ENCODE measurements at regions of chr2 and their contacts with region 1.

Region 1: GRCh38 chr2:170361090-170361936 is 183.4 kb downstream of the MYO3B start:
- DNase-seq: peak; percentile 77
- H3K4me3 Mint-ChIP-seq: no peak overlapping the region
- H3K27ac Mint-ChIP-seq: no peak overlapping the region
- H3K4me1 Mint-ChIP-seq: peaks cover 7% of the 10 kb centered on the region
- H3K27me3 Mint-ChIP-seq: peaks cover 58% of the 10 kb centered on the region
- CTCF ChIP-seq: peak; percentile 76

Region 2: DNA sequence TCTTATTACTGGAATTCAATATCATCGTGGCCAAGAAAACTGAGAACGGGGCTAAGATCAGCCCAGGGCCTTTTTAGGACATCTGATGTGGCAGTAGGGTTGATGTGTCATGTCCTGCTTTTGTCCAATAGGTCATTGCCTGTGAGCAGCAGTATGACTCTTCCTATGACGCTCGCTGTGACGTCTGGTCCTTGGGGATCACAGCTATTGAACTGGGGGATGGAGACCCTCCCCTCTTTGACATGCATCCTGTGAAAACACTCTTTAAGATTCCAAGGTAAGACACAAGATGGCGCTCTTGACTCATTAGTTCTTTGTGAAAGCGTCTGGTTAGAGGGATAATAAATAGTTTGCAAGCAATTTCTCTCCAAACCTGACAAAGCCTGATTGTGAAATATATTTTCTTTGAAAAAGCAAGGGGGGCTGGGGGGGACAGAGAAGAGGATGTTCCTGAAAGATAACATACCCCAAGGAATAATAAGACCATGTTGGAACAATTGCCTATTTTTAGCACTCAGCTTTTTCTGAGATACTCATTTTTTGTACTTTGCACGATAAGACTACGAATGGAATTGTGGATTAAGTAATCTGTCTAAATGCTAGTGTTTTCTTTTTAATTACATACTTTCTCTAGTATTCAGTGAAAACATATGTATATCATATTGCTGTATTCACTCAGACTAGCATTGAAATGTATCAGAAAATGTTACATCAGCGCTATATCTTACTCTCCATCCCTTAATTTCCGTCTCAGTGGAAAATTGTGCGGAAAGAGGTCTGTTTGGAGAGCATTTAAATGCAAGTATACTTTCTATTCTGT is 125.2 kb before region 1 on chr2:
- CTCF ChIA-PET with region 1: interaction called, 7 read pairs
- POLR2A ChIA-PET with region 1: interaction called, 4 read pairs
- intact Hi-C with region 1: loop called (anchors 2 kb)
- DNase-seq: peak; percentile 70
- H3K4me3 Mint-ChIP-seq: no peak overlapping the region
- H3K27ac Mint-ChIP-seq: no peak overlapping the region
- H3K4me1 Mint-ChIP-seq: no peaks in the 10 kb centered on the region
- H3K27me3 Mint-ChIP-seq: peaks cover 41% of the 10 kb centered on the region
- CTCF ChIP-seq: peak; percentile 60

Region 3: GRCh38 chr2:170324640-170325046 is 36.7 kb before region 1 on chr2:
- CTCF ChIA-PET with region 1: interaction called, 31 read pairs
- POLR2A ChIA-PET with region 1: interaction called, 4 read pairs
- intact Hi-C with region 1: loop called (anchors 5 kb)
- DNase-seq: peak; percentile 58
- H3K4me3 Mint-ChIP-seq: no peak overlapping the region
- H3K27ac Mint-ChIP-seq: no peak overlapping the region
- H3K4me1 Mint-ChIP-seq: no peaks in the 10 kb centered on the region
- H3K27me3 Mint-ChIP-seq: no peaks in the 10 kb centered on the region
- CTCF ChIP-seq: peak; percentile 63

Region 4: GRCh38 chr2:170344663-170345346 is 16.5 kb before region 1 on chr2:
- CTCF ChIA-PET with region 1: interaction called, 19 read pairs
- POLR2A ChIA-PET with region 1: no interaction called
- intact Hi-C with region 1: no loop called
- DNase-seq: no peak
- H3K4me3 Mint-ChIP-seq: no peak overlapping the region
- H3K27ac Mint-ChIP-seq: peak overlapping the region; percentile 29
- H3K4me1 Mint-ChIP-seq: peaks cover 6% of the 10 kb centered on the region
- H3K27me3 Mint-ChIP-seq: no peaks in the 10 kb centered on the region
- CTCF ChIP-seq: no peak

Region 5: GRCh38 chr2:170350929-170351826 is 10.1 kb before region 1 on chr2:
- CTCF ChIA-PET with region 1: interaction called, 19 read pairs
- POLR2A ChIA-PET with region 1: interaction called, 3 read pairs
- intact Hi-C with region 1: no loop called
- DNase-seq: no peak
- H3K4me3 Mint-ChIP-seq: no peak overlapping the region
- H3K27ac Mint-ChIP-seq: no peak overlapping the region
- H3K4me1 Mint-ChIP-seq: no peaks in the 10 kb centered on the region
- H3K27me3 Mint-ChIP-seq: peaks cover 11% of the 10 kb centered on the region
- CTCF ChIP-seq: no peak

Region 6: GRCh38 chr2:170377500-170378207 is 16.3 kb after region 1 on chr2:
- CTCF ChIA-PET with region 1: interaction called, 35 read pairs
- POLR2A ChIA-PET with region 1: interaction called, 3 read pairs
- intact Hi-C with region 1: no loop called
- DNase-seq: no peak
- H3K4me3 Mint-ChIP-seq: no peak overlapping the region
- H3K27ac Mint-ChIP-seq: no peak overlapping the region
- H3K4me1 Mint-ChIP-seq: peaks cover 17% of the 10 kb centered on the region
- H3K27me3 Mint-ChIP-seq: peaks cover 11% of the 10 kb centered on the region
- CTCF ChIP-seq: no peak

Region 7: DNA sequence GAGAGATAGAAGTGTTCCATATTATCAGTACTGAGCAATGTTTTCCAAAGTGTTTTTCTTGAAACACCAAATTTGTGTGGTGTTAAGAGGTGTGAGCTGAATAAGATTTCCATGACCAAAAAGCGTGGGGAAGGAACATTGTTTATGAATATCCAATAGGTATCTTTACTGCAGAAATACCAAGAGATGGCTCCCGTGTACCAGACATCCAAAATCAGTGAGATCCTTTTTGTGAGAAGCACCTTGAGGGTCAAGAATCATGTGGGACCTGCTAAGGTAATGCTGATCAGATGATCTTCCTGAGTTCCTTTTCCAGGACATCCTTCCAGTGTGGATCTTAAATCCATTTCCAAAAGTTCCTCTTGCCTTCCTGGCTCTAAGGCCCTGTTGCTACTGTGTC is 62.6 kb after region 1 on chr2:
- CTCF ChIA-PET with region 1: no interaction called
- POLR2A ChIA-PET with region 1: no interaction called
- intact Hi-C with region 1: no loop called
- DNase-seq: no peak
- H3K4me3 Mint-ChIP-seq: no peak overlapping the region
- H3K27ac Mint-ChIP-seq: no peak overlapping the region
- H3K4me1 Mint-ChIP-seq: no peaks in the 10 kb centered on the region
- H3K27me3 Mint-ChIP-seq: peaks cover 11% of the 10 kb centered on the region
- CTCF ChIP-seq: no peak

Region 8: GRCh38 chr2:170434900-170435621 is 73.7 kb after region 1 on chr2:
- CTCF ChIA-PET with region 1: no interaction called
- POLR2A ChIA-PET with region 1: no interaction called
- intact Hi-C with region 1: no loop called
- DNase-seq: no peak
- H3K4me3 Mint-ChIP-seq: no peak overlapping the region
- H3K27ac Mint-ChIP-seq: no peak overlapping the region
- H3K4me1 Mint-ChIP-seq: no peaks in the 10 kb centered on the region
- H3K27me3 Mint-ChIP-seq: no peaks in the 10 kb centered on the region
- CTCF ChIP-seq: no peak

Region 9: GRCh38 chr2:170485254-170486026 is 124.1 kb after region 1 on chr2:
- CTCF ChIA-PET with region 1: no interaction called
- POLR2A ChIA-PET with region 1: no interaction called
- intact Hi-C with region 1: no loop called
- DNase-seq: no peak
- H3K4me3 Mint-ChIP-seq: no peak overlapping the region
- H3K27ac Mint-ChIP-seq: no peak overlapping the region
- H3K4me1 Mint-ChIP-seq: no peaks in the 10 kb centered on the region
- H3K27me3 Mint-ChIP-seq: no peaks in the 10 kb centered on the region
- CTCF ChIP-seq: no peak

Region 10: DNA sequence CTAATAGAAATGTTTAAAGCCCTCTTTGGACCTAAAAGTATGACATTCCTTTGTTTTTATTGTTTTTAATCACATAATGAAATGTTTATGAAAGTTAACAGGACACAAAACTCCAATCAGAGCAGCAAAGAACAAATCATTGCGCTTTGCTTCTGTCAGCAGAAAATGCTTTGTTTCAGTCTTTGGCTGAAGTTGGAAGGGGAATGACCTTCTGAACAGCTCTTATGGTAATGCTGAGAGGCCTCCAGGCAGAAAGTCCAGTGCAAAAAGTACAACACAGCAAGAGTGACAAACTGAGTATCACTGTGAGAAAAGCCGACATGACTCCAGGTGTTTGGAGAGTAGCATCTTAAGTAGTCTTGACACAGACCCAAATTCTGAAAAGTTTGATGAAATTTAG is 206.1 kb after region 1 on chr2:
- CTCF ChIA-PET with region 1: no interaction called
- POLR2A ChIA-PET with region 1: no interaction called
- intact Hi-C with region 1: no loop called
- DNase-seq: no peak
- H3K4me3 Mint-ChIP-seq: no peak overlapping the region
- H3K27ac Mint-ChIP-seq: no peak overlapping the region
- H3K4me1 Mint-ChIP-seq: no peaks in the 10 kb centered on the region
- H3K27me3 Mint-ChIP-seq: no peaks in the 10 kb centered on the region
- CTCF ChIP-seq: no peak

Measured in MCF 10A (cell line).